Naive thymus-derived CD4-positive, alpha-beta T cell (primary cell): ENCODE measurements at regions of chr22 and their contacts with region 1.

Region 1: DNA sequence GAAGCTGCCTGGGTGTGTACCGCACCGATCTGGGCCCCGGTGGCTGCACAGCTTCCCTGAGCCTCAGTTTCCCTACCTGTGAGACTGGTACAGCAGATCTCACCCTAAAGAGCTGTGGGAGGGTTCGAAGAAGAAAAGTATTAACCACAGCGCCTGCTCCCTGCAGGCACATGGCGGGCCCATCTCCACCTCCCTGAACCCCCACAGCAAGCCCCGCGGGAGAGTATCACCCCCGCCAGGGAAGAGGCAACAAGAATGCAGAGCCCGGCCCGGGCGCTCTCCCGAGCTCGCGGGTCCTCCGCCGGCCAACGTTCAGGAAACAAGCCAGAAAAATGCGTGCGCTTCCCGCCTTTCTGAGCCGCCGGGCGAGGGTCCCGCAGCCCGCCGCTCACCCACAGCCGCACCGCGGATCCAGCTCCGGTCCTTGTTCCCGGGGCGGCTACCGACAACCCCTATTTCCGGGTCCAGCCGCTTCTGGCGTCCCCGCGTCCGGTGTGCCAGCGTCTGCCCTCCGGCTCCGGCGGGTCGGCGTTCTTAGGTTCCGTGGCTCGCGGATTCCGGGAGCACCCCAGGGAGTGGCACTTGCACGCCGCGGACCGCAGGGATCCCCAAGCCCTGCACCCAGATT is at the start of gene TOP3B:
- DNase-seq: peak; percentile 66 to 87 (median 74)
- ATAC-seq: peak; percentile 95
- H3K4me3 ChIP-seq: peak within 1 kb of the TSS; percentile 90
- H3K4me3 Mint-ChIP-seq: peak within 1 kb of the TSS; percentile 86 to 92 (median 89)
- H3K27ac ChIP-seq: peak within 1 kb of the TSS; percentile 86
- H3K27ac Mint-ChIP-seq: peak within 1 kb of the TSS; percentile 81 to 94 (median 87)
- H3K4me1 ChIP-seq: peaks cover 12% of the 10 kb centered on the region in 2 donors
- H3K4me1 Mint-ChIP-seq: peaks cover 14 to 51% (median 47%) of the 10 kb centered on the region in 7 donors
- H3K27me3 ChIP-seq: no peaks in the 10 kb centered on the region
- H3K27me3 Mint-ChIP-seq: no peaks in the 10 kb centered on the region
- total RNA-seq, gene TOP3B: 43.4 to 80.5 (median 59.1) TPM

Region 2: GRCh38 chr22:21947040-21948014 is 35.1 kb before region 1 on chr22:
- CTCF ChIA-PET with region 1: no interaction called
- POLR2A ChIA-PET with region 1: no interaction called
- intact Hi-C with region 1: loop called in 1 of 2 experiments (anchors 5 kb)
- DNase-seq: no peak
- ATAC-seq: no peak
- H3K4me3 ChIP-seq: no peak overlapping the region
- H3K4me3 Mint-ChIP-seq: no peak overlapping the region
- H3K27ac ChIP-seq: no peak overlapping the region
- H3K27ac Mint-ChIP-seq: peak overlapping the region in 6 of 9 donors; percentile 26 to 77 (median 34)
- H3K4me1 ChIP-seq: peaks cover 4 to 7% of the 10 kb centered on the region in 2 donors
- H3K4me1 Mint-ChIP-seq: peaks cover 19 to 44% (median 36%) of the 10 kb centered on the region in 7 donors
- H3K27me3 ChIP-seq: no peaks in the 10 kb centered on the region
- H3K27me3 Mint-ChIP-seq: no peaks in the 10 kb centered on the region

Region 3: GRCh38 chr22:21996175-21996720 is 13.8 kb after region 1 on chr22:
- CTCF ChIA-PET with region 1: no interaction called
- POLR2A ChIA-PET with region 1: no interaction called
- intact Hi-C with region 1: no loop called
- DNase-seq: no peak
- ATAC-seq: no peak
- H3K4me3 ChIP-seq: no peak overlapping the region
- H3K4me3 Mint-ChIP-seq: no peak overlapping the region
- H3K27ac ChIP-seq: no peak overlapping the region
- H3K27ac Mint-ChIP-seq: no peak overlapping the region
- H3K4me1 ChIP-seq: no peaks in the 10 kb centered on the region
- H3K4me1 Mint-ChIP-seq: peaks cover 0 to 4% (median 0%) of the 10 kb centered on the region in 7 donors
- H3K27me3 ChIP-seq: no peaks in the 10 kb centered on the region
- H3K27me3 Mint-ChIP-seq: peaks cover 0 to 11% (median 3%) of the 10 kb centered on the region in 5 donors

Region 4: GRCh38 chr22:22593964-22594656 is 611.7 kb after region 1 on chr22:
- CTCF ChIA-PET with region 1: no interaction called
- POLR2A ChIA-PET with region 1: no interaction called
- intact Hi-C with region 1: no loop called
- DNase-seq: peak; percentile 23 to 53 (median 34)
- ATAC-seq: peak; percentile 81
- H3K4me3 ChIP-seq: no peak overlapping the region
- H3K4me3 Mint-ChIP-seq: no peak overlapping the region
- H3K27ac ChIP-seq: no peak overlapping the region
- H3K27ac Mint-ChIP-seq: no peak overlapping the region
- H3K4me1 ChIP-seq: no peaks in the 10 kb centered on the region
- H3K4me1 Mint-ChIP-seq: peaks cover 0 to 5% (median 0%) of the 10 kb centered on the region in 7 donors
- H3K27me3 ChIP-seq: no peaks in the 10 kb centered on the region
- H3K27me3 Mint-ChIP-seq: peaks cover 0 to 9% (median 6%) of the 10 kb centered on the region in 5 donors